ENCODE measurements at regions of chr5 and their contacts with region 1.

Region 1: GRCh38 chr5:35369965-35370790 is 139.9 kb upstream of the PRLR start:
- DNase-seq: no peak
- H3K4me3 ChIP-seq: no peak overlapping the region
- H3K27ac ChIP-seq: no peak overlapping the region
- H3K4me1 ChIP-seq: no peaks in the 10 kb centered on the region
- H3K27me3 ChIP-seq: no peaks in the 10 kb centered on the region
- CTCF ChIP-seq: no peak
- POLR2A ChIP-seq: no peak

Region 2: DNA sequence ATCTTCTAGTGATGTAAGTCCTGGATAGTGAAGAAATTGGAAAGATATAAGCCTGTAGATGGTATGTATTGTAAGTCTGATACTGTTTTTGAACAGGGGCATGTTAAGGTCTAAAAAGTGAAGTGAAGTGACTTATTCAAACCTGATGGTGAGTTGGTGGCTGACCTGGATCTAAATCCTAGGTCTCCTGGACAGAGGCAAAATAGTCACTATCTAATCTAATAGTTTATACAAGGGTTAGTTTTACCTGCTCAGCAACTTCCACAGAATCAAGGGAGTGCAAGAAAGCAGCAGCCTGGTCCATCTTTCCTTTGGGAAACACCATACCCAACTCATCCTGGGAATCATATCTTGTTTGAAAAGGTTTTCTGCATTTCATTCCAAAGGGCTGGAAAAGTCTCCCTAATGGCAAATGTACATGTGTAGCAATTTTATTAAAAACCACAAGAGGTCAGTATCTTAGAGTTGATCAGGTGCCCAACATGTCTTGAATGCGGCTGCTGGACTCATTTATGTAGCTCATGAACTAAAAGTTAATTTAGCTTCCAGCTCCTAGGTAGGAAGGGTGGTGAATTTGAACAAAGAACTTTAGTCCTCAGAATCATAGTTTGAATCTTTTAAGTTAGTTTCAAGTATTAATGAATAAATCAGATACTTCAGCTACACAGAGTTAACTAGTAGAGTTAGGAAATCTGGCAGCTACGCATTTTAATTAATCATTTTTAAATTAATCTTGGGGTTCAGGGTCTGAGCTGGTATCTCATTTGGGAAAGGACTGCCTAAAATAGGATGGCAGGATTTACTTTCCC is 807.7 kb after region 1 on chr5:
- intact Hi-C with region 1: loop called (anchors 10 kb)
- DNase-seq: no peak
- H3K4me3 ChIP-seq: no peak overlapping the region
- H3K27ac ChIP-seq: no peak overlapping the region
- H3K4me1 ChIP-seq: no peaks in the 10 kb centered on the region
- H3K27me3 ChIP-seq: no peaks in the 10 kb centered on the region
- CTCF ChIP-seq: peak in 2 of 3 donors; percentile 29 to 46
- POLR2A ChIP-seq: no peak

Measured in breast epithelium (tissue), 4 donors.